ENCODE measurements at regions of chr1 and their contacts with region 1.

Region 1: GRCh38 chr1:153288634-153289275 is 24.0 kb downstream of the PGLYRP3 start:
- DNase-seq: peak; percentile 40
- ATAC-seq: peak; percentile 53
- H3K4me3 ChIP-seq: no peak overlapping the region
- H3K27ac ChIP-seq: no peak overlapping the region
- H3K4me1 ChIP-seq: no peaks in the 10 kb centered on the region
- H3K27me3 ChIP-seq: peaks cover 55% of the 10 kb centered on the region
- CTCF ChIP-seq: peak; percentile 75

Region 2: DNA sequence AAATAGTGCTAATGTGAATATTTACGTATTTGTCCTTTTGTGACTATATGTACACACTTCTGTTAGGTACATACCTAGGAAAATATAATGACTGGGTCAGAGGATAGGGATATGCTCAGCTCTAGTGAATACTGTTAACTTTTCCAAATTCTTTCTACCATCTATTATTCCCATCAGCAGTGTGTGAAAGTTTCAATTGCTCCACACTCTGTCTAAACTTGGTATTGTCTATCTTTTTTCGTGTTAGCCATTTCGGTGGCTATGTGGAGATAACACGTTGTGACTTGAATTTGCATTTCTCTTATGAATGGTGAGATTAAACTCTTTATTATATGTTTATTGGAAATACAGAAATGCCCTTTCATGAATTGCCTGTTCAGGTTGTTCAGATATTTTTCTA is 108.2 kb before region 1 on chr1:
- CTCF ChIA-PET with region 1: no interaction called
- POLR2A ChIA-PET with region 1: no interaction called
- intact Hi-C with region 1: no loop called
- DNase-seq: no peak
- ATAC-seq: no peak
- H3K4me3 ChIP-seq: no peak overlapping the region
- H3K27ac ChIP-seq: no peak overlapping the region
- H3K4me1 ChIP-seq: no peaks in the 10 kb centered on the region
- H3K27me3 ChIP-seq: peaks cover 42% of the 10 kb centered on the region
- CTCF ChIP-seq: peak; percentile 44

Region 3: DNA sequence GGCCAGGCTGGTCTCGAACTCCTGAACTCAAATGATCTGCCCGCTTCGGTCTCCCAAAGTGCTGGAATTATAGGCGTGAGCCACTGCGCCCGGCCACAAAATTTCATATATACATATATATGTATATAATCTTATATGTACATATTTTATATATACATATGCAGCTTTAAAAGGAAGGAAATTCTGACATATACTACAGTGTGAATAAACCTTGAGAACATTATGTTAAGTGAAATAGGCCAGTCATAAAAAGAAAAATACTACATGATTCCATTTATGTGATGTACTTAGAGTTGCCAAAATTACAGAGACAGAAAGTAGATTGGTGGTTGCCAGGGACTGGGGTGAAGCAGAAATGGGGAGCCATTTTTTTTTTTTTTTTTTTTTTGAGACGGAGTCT is 803.0 kb after region 1 on chr1:
- CTCF ChIA-PET with region 1: no interaction called
- POLR2A ChIA-PET with region 1: interaction called, 15 read pairs
- intact Hi-C with region 1: no loop called
- DNase-seq: no peak
- ATAC-seq: no peak
- H3K4me3 ChIP-seq: no peak overlapping the region
- H3K27ac ChIP-seq: no peak overlapping the region
- H3K4me1 ChIP-seq: no peaks in the 10 kb centered on the region
- H3K27me3 ChIP-seq: no peaks in the 10 kb centered on the region
- CTCF ChIP-seq: no peak

Measured in PC-3 (cell line).